ENCODE measurements at regions of chr6 and their contacts with region 1.

Region 1: DNA sequence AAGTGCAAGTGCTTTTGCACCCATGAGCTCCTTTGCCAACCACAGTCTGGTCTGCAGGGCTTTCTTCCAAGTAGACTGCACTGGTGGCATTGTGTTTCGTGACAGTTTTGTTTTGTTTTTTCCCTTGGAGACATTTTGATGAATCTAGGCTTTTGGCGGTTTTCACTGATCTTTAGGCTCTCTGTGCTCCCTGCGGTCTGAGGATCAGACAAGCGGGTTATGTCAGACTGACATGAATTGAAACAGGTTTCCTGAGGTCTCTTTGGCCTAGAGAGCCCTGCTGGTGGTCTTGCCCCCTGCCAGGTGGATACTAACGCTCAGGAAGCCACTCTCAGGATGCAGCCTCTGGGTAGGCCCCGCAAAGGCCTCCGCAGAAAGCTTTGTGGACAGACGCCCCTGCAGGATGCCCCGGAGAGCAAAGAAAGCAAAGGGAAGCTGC is 555.4 kb upstream of the AGPAT4 start:
- DNase-seq: peak in 1 of 2 donors; percentile 22
- H3K4me3 ChIP-seq: no peak overlapping the region
- H3K27ac ChIP-seq: no peak overlapping the region
- H3K4me1 ChIP-seq: no peaks in the 10 kb centered on the region
- H3K27me3 ChIP-seq: no peaks in the 10 kb centered on the region
- CTCF ChIP-seq: no peak
- POLR2A ChIP-seq: no peak

Region 2: GRCh38 chr6:161489626-161490306 is 339.5 kb before region 1 on chr6:
- intact Hi-C with region 1: no loop called
- DNase-seq: no peak
- H3K4me3 ChIP-seq: no peak overlapping the region
- H3K27ac ChIP-seq: no peak overlapping the region
- H3K4me1 ChIP-seq: no peaks in the 10 kb centered on the region
- H3K27me3 ChIP-seq: no peaks in the 10 kb centered on the region
- CTCF ChIP-seq: no peak
- POLR2A ChIP-seq: no peak

Region 3: GRCh38 chr6:161761966-161762365 is 67.3 kb before region 1 on chr6:
- intact Hi-C with region 1: loop called (anchors 2 kb)
- DNase-seq: no peak
- H3K4me3 ChIP-seq: no peak overlapping the region
- H3K27ac ChIP-seq: no peak overlapping the region
- H3K4me1 ChIP-seq: no peaks in the 10 kb centered on the region
- H3K27me3 ChIP-seq: no peaks in the 10 kb centered on the region
- CTCF ChIP-seq: no peak
- POLR2A ChIP-seq: no peak

Measured in vagina (tissue), 2 donors.